Activated naive CD4-positive, alpha-beta T cell treated with anti-CD3 and anti-CD28 coated beads for 36 hours (primary cell): ENCODE measurements at regions of chr15 and their contacts with region 1.

Region 1: GRCh38 chr15:31365655-31366127 is 39.1 kb downstream of the KLF13 start:
- DNase-seq: peak; percentile 88
- H3K4me3 Mint-ChIP-seq: peak overlapping the region; percentile 74
- H3K27ac Mint-ChIP-seq: peak overlapping the region; percentile 99
- H3K4me1 Mint-ChIP-seq: peaks cover 97% of the 10 kb centered on the region
- H3K27me3 Mint-ChIP-seq: no peaks in the 10 kb centered on the region

Region 2: DNA sequence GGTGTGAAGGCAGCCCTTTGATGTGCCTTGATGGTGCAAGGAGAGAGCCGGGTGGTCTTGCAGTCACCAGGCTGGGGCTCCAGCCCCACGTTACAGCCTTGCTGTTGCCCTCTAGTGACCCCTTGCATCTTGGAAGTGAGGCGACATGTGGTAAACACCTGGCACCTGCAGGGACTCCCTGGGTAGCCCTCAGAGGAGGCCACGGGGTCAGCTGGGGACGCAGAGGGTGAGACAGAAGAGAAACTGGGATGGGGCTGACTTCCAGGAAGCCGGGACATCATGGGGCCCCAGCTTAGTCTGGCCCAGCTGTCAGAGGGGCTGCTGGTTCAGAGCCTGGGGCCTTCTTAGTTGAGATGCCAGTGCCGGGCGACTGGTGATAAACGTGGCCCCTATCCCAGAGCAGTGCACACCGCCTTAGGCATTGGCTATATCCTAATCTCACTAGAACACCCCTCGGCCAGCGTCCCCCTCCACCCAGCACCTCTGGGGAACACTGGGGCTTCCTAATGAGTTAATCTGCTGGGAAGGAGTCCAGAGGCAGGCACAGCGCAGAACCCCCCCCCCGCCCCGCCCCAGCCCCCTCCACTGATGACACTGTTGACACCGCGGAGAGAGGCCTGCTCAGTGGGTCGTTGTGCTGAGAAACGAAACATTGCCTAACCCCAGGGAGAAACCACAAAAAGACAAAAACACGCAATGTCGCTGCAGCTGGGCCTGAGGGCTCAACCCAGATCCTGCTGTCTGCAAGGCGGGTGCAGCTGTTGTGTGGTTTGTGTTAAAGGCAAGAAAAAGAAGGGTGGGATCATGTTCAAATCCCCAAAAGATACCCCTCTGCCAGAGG is 99.6 kb before region 1 on chr15:
- CTCF ChIA-PET with region 1: no interaction called
- intact Hi-C with region 1: loop called (anchors 5 kb)
- DNase-seq: peak; percentile 81
- H3K4me3 Mint-ChIP-seq: no peak overlapping the region
- H3K27ac Mint-ChIP-seq: peak overlapping the region; percentile 67
- H3K4me1 Mint-ChIP-seq: peaks cover 84% of the 10 kb centered on the region
- H3K27me3 Mint-ChIP-seq: no peaks in the 10 kb centered on the region

Region 3: DNA sequence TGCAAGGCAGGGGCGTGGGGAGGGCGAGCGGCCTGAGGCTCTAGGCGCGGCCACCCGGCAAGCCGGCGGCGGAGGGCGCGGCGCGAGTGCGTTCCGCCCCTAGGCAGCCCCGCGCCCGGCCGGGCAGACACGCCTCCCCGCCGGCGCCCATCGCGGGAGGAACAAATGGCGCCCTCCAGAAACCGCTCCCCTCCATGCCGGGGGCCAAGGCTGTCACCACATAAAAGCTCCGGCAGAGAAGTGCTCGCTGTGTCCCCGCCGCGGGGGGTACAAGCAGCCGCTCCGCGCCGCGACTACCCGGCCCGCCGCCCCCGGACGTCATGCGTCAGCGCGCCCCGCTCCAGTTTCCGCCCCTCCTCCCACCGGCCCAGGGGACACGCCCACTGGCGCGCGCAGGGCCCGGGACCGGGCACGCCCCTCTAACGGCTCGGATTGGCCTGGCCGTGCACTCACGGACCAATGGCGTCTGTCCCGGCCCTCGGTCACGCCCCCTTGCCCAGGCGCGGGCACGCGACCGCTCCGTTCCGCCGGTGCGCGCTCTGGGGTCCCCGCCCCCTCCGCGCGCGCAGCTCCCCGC is 39.4 kb before region 1 on chr15:
- CTCF ChIA-PET with region 1: interaction called, 7 read pairs
- intact Hi-C with region 1: loop called (anchors 1 kb)
- DNase-seq: peak; percentile 99
- H3K4me3 Mint-ChIP-seq: peak overlapping the region; percentile 87
- H3K27ac Mint-ChIP-seq: peak overlapping the region; percentile 78
- H3K4me1 Mint-ChIP-seq: peaks cover 33% of the 10 kb centered on the region
- H3K27me3 Mint-ChIP-seq: no peaks in the 10 kb centered on the region

Region 4: GRCh38 chr15:31352911-31353811 is 12.5 kb before region 1 on chr15:
- CTCF ChIA-PET with region 1: interaction called, 21 read pairs
- intact Hi-C with region 1: loop called (anchors 1 kb)
- DNase-seq: peak; percentile 78
- H3K4me3 Mint-ChIP-seq: peak overlapping the region; percentile 57
- H3K27ac Mint-ChIP-seq: peak overlapping the region; percentile 95
- H3K4me1 Mint-ChIP-seq: peaks cover 98% of the 10 kb centered on the region
- H3K27me3 Mint-ChIP-seq: no peaks in the 10 kb centered on the region

Region 5: DNA sequence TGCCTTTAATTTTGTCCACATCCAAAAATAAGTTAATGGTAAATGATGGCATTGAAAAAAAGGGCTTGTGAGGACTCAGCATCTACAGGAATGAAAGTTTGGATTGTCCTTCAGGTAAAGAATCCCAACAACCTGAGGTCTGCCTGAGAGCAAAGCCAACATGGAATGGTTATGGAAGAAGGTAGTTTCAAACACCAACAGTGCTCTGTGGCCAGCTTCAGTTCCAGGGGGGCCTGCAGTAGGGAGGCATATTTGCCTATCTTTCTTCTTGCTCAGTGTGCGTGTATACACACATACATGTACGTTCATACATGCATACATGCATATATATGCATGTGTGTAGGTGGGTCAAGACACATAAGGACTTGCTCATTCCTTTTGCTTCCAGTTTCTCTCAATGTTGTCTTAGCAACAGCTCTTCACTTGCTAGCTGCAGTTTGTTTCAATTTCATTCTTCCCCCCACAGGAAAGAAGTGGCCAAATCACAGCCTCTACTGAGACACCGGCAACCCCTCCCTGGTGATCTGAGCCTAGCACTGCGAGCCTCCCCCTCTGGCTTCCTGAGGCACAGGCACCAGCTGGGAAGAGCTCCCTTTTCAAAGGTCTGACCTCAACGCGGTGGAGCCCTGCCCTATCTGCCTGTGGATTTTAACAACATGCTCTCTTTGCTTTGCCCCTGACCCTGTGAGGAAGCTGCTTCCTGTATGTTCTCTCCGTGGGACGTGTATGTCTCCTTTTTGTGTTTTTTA is 107.1 kb after region 1 on chr15:
- CTCF ChIA-PET with region 1: interaction called, 4 read pairs
- intact Hi-C with region 1: loop called (anchors 5 kb)
- DNase-seq: peak; percentile 81
- H3K4me3 Mint-ChIP-seq: peak overlapping the region; percentile 64
- H3K27ac Mint-ChIP-seq: peak overlapping the region; percentile 94
- H3K4me1 Mint-ChIP-seq: peaks cover 44% of the 10 kb centered on the region
- H3K27me3 Mint-ChIP-seq: no peaks in the 10 kb centered on the region